Breast epithelium (tissue), 4 donors: ENCODE measurements at regions of chr20 and their contacts with region 1.

Region 1: DNA sequence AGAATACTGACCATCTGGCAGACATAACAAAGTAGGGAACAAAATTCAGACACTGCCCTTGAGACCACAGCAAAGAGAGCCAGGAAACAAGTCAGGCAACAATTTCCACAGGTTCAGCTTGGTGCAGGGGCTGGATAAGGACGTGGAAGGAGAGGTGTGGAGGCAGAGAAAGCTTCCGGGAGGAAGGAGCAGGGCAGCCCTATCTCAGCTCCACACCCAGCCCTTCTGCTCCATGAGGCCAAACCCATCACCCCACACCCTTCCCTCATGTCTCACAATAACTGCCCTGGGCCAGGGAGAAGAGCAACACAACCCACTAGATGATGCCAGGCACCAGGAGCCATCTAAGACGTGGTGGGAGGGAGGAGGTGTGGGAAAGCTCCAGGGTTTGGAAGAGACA is 5.8 kb downstream of the SNHG17 start:
- DNase-seq: no peak
- H3K4me3 ChIP-seq: no peak overlapping the region
- H3K27ac ChIP-seq: no peak overlapping the region
- H3K4me1 ChIP-seq: no peaks in the 10 kb centered on the region
- H3K27me3 ChIP-seq: no peaks in the 10 kb centered on the region
- CTCF ChIP-seq: no peak
- POLR2A ChIP-seq: no peak

Region 2: DNA sequence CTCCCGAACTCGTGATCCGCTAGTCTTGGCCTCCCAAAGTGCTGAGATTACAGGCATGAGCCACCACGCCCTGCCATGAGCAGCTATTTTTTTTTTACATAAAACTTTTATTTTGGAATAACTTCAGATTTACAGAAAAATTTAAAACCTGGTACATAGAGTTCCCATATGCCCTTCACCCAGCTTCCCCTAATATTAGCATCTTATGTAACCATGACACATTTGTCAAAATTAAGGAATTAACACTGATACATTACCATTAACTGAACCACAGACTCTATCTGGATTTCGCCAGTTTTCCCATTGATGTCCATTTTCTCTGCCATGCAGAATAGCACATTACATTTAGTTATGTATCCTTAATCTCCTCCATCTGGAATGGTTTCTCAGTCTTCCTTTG is 29.0 kb after region 1 on chr20:
- intact Hi-C with region 1: loop called (anchors 1 kb)
- DNase-seq: no peak
- H3K4me3 ChIP-seq: no peak overlapping the region
- H3K27ac ChIP-seq: no peak overlapping the region
- H3K4me1 ChIP-seq: no peaks in the 10 kb centered on the region
- H3K27me3 ChIP-seq: no peaks in the 10 kb centered on the region
- CTCF ChIP-seq: no peak
- POLR2A ChIP-seq: no peak

Region 3: DNA sequence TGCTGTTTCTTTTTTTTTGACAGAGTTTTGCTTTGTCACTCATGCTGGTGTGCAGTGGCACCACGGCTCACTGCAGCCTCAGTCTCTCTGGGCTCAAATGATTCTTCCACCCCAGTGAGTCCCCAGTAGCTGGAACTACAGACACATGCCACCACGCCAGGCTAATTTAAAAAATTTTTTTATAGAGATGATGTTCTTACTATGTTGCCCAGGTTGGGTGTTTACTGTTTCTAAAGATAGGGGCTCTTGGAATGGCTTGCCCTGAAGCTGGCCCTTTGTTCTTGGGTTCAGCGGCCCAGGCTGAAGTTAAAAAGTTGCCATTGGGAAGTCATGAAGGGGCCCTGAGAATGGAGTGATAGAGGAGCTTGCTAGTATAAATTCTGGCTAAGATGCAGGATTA is 59.9 kb after region 1 on chr20:
- intact Hi-C with region 1: no loop called
- DNase-seq: no peak
- H3K4me3 ChIP-seq: no peak overlapping the region
- H3K27ac ChIP-seq: no peak overlapping the region
- H3K4me1 ChIP-seq: no peaks in the 10 kb centered on the region
- H3K27me3 ChIP-seq: no peaks in the 10 kb centered on the region
- CTCF ChIP-seq: no peak
- POLR2A ChIP-seq: no peak